ENCODE measurements at regions of chr1 and their contacts with region 1.

Region 1: DNA sequence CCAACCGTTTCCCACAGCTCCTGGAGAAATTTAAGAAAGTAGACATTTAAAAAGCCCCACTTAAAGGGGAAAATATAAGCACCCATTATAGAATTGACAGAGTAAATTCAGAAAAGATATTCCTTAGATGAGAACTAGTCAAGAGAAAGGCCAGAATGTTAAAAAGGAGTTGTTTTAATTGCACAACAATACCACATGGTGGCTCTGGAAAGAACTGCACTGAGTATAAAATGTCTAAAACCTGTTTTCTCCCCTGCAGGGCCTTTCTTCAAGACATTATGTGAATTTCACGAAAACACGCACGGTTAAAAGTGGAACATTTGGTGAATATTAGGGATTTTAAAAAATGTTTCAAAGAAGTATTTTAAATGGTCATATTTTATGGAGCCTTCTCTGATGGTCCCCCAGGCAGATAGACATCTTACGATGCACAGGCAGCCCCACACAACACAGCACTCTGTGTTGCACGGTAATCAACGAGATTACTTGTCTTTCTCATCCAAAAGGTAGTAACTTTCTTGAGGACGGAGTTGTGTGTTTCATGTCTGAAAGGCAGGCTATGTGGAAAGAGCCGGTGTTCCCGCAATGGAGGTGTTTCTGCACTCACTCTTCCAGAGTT is 101.9 kb downstream of the PRRX1 start:
- DNase-seq: no peak
- H3K4me3 ChIP-seq: no peak overlapping the region
- H3K27ac ChIP-seq: no peak overlapping the region
- H3K4me1 ChIP-seq: no peaks in the 10 kb centered on the region
- H3K27me3 ChIP-seq: no peaks in the 10 kb centered on the region
- CTCF ChIP-seq: peak; percentile 78 to 88

Region 2: GRCh38 chr1:170010443-170010842 is 755.4 kb before region 1 on chr1:
- intact Hi-C with region 1: loop called (anchors 10 kb)
- DNase-seq: peak in 1 of 2 donors; percentile 51
- H3K4me3 ChIP-seq: no peak overlapping the region
- H3K27ac ChIP-seq: no peak overlapping the region
- H3K4me1 ChIP-seq: no peaks in the 10 kb centered on the region
- H3K27me3 ChIP-seq: no peaks in the 10 kb centered on the region
- CTCF ChIP-seq: peak; percentile 32 to 55

Region 3: DNA sequence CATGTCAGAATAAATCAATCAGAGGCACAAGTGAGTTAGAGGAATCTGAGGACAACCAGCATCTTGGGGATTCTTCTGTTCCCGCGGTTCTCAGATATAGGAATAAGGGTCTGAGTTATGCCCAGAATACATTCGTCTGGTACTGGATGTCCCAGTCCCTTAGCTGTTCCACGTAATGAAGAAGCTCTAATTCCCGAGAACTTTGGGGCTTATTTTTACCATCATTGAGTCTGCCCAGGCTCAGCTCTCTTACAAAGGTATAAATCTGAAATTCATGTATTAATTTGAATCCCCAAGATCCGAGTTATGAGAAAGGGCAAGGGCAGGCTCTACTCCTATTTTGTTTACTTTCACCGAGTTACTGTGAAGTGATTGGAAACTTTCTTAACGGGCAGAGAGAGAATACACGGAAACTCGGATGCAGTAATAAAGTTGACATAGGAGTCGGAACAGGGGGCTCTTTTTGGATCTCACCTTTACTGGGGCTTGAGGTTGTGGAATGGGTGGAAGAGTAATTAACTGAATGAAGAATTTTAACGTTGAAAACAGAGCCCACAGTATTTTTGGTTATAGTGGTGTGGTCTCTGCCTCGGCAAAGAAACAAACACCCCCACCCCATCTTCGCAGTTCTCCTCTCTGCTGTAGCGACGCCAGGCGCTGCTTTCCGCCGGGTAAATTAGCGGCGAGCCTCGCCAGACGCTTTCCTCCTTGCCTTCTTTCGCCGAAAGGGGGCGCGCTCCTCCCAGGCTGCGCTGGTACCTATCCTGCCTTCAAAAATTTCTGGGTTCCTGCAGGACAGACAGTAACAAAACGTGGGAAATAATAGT is 94.8 kb before region 1 on chr1:
- intact Hi-C with region 1: loop called (anchors 5 kb)
- DNase-seq: peak; percentile 75 to 88
- H3K4me3 ChIP-seq: peak overlapping the region; percentile 79 to 90
- H3K27ac ChIP-seq: peak overlapping the region; percentile 95 to 99
- H3K4me1 ChIP-seq: peaks cover 0 to 81% (median 40%) of the 10 kb centered on the region in 4 donors
- H3K27me3 ChIP-seq: no peaks in the 10 kb centered on the region
- CTCF ChIP-seq: peak; percentile 89 to 93

Region 4: GRCh38 chr1:170685166-170685565 is 80.7 kb before region 1 on chr1:
- intact Hi-C with region 1: loop called (anchors 5 kb)
- DNase-seq: no peak
- H3K4me3 ChIP-seq: no peak overlapping the region
- H3K27ac ChIP-seq: peak overlapping the region; percentile 57 to 75
- H3K4me1 ChIP-seq: peaks cover 0 to 97% (median 25%) of the 10 kb centered on the region in 4 donors
- H3K27me3 ChIP-seq: no peaks in the 10 kb centered on the region
- CTCF ChIP-seq: no peak

Region 5: DNA sequence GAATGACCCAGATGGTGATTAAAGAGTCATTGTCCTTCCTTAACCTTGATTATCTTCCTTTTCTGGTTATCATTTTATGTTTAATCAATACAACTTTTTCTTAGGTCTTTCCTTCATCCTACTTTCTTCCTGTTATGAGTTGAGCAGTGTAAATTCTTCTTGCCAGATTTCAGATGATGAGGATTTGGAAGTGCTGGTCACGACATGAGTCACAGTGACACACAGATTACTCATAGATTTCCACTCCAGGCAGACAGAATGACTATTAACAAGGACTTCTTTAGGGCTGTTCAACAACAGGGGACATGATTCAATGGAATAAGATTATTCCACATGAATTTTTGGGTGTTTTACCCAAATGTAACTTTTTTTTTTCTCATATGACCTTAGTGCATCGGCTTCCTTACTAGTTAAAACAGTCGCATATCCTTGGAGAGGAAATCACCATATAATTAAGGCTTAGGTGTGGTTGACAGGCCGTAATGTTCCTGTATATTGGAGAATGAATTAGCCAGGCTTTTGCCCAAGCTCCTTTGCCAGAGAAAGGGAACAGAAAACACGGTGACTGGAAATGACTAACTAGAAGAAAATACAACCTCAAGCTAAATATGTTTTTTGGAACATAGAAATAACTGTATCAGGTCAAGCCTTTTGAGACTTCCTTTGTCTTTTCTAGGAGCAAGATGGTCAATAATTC is 57.7 kb before region 1 on chr1:
- intact Hi-C with region 1: no loop called
- DNase-seq: peak in 1 of 2 donors; percentile 31
- H3K4me3 ChIP-seq: no peak overlapping the region
- H3K27ac ChIP-seq: peak overlapping the region; percentile 56 to 70
- H3K4me1 ChIP-seq: peaks cover 4 to 91% (median 43%) of the 10 kb centered on the region in 4 donors
- H3K27me3 ChIP-seq: no peaks in the 10 kb centered on the region
- CTCF ChIP-seq: no peak

Region 6: DNA sequence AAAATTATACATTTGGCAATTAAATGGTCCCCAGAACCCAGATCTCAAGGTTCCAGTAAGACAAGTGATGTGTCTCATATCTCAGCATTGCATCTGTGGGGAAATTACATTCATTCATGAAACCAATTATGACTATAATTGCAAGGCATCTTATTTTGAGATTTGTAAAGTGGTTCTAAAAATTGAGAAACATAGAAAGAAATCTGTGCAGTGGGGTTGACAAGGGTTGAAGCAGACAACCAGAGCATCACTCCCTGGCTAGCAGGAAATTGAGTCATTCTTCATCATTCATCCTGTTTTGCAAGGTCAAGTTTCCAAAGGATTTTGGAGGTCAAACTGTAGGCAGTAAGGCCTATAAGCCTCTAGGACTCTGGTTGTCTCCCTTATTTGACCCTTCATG is 144.5 kb after region 1 on chr1:
- intact Hi-C with region 1: no loop called
- DNase-seq: no peak
- H3K4me3 ChIP-seq: no peak overlapping the region
- H3K27ac ChIP-seq: peak overlapping the region in 1 of 2 donors; percentile 18
- H3K4me1 ChIP-seq: peaks cover 0 to 15% (median 0%) of the 10 kb centered on the region in 4 donors
- H3K27me3 ChIP-seq: no peaks in the 10 kb centered on the region
- CTCF ChIP-seq: no peak